ENCODE measurements at regions of chr5 and their contacts with region 1.

Region 1: GRCh38 chr5:139787568-139788293 is 7.9 kb upstream of the PSD2 start:
- DNase-seq: peak; percentile 79 to 95 (median 86)
- H3K4me3 ChIP-seq: peak overlapping the region in 3 of 4 donors; percentile 40 to 63 (median 62)
- H3K27ac ChIP-seq: peak overlapping the region in 2 of 5 donors; percentile 15 to 37
- H3K4me1 ChIP-seq: no peaks in the 10 kb centered on the region
- H3K27me3 ChIP-seq: no peaks in the 10 kb centered on the region
- CTCF ChIP-seq: peak; percentile 90 to 99 (median 98)
- POLR2A ChIP-seq: no peak

Region 2: GRCh38 chr5:139501381-139501780 is 286.4 kb before region 1 on chr5:
- intact Hi-C with region 1: no loop called
- DNase-seq: no peak
- H3K4me3 ChIP-seq: no peak overlapping the region
- H3K27ac ChIP-seq: no peak overlapping the region
- H3K4me1 ChIP-seq: no peaks in the 10 kb centered on the region
- H3K27me3 ChIP-seq: no peaks in the 10 kb centered on the region
- CTCF ChIP-seq: no peak
- POLR2A ChIP-seq: no peak

Region 3: DNA sequence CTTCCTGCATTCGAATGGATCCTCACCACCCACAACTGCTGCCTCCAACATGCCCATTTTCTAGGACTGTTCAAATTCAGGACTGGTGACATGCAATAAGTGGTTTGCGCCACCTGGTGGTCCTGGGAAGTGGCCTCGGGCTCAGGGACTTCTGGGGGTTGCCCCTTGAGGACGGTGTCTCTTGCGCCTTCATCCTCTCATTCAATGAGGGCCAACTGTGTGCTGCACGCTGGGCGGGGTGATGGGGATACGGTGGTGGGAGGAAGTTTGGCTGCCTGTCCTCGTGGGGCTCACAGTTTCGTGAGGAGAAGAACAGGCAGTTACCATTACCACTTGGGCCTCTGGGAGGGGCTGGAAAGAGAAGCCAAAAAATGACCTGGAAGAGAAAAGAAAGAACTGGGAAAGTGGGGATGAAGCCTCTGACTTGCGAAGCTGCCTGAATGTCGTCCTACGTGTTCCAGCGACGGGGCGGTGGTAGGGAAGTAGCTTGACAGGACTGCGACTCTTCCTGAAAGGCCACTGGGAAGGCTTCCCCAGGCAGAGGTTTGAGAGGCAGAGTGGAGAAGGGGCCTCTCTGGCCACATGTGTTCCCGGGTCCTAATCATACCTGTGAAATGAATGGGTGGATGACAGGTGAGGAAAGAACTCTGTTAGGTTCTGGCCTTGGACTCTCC is 56.9 kb after region 1 on chr5:
- intact Hi-C with region 1: loop called (anchors 5 kb)
- DNase-seq: peak; percentile 46 to 90 (median 75)
- H3K4me3 ChIP-seq: no peak overlapping the region
- H3K27ac ChIP-seq: no peak overlapping the region
- H3K4me1 ChIP-seq: no peaks in the 10 kb centered on the region
- H3K27me3 ChIP-seq: no peaks in the 10 kb centered on the region
- CTCF ChIP-seq: peak; percentile 47 to 70 (median 65)
- POLR2A ChIP-seq: no peak

Region 4: GRCh38 chr5:139863855-139864558 is 76.3 kb after region 1 on chr5:
- intact Hi-C with region 1: loop called (anchors 5 kb)
- DNase-seq: peak; percentile 64 to 88 (median 74)
- H3K4me3 ChIP-seq: no peak overlapping the region
- H3K27ac ChIP-seq: peak overlapping the region in 2 of 5 donors; percentile 54 to 62
- H3K4me1 ChIP-seq: peaks cover 6 to 12% of the 10 kb centered on the region in 2 donors
- H3K27me3 ChIP-seq: no peaks in the 10 kb centered on the region
- CTCF ChIP-seq: peak; percentile 87 to 96 (median 88)
- POLR2A ChIP-seq: no peak

Region 5: DNA sequence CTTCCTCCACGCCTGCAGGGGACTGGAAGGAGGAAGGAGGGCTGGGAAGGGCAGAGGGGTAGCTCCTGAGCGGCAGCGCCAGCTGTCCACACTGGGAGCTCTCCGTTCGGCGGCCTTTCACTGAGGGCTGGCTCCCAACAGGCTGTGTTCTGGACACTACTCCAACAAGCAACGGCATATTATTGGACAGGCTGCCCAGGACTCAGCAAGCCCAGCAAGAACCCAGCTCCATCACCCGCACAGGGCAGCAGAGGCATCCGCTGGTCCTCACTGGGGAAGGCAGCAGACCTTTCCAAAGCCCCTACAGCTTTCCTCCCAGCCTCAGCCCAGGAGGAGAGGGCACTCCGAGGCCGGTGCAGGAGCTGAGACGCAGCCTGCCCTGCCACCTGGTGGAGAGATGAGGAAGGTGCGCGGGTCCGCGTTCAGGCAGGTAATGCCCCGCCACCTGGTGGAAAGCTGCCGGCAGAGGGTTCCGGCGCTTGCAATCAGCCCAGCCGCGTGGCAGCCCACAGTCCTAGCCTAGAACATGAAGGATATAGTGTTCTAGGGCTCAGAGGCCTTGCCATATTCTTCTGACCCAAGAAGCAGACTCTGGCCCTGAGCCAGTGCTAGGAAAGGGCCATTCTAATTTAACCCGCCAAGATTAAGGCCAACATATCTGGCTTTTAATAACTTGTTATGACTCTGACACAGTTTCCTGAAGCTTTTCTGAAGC is 181.0 kb after region 1 on chr5:
- intact Hi-C with region 1: loop called (anchors 2 to 5 kb)
- DNase-seq: peak; percentile 79 to 96 (median 91)
- H3K4me3 ChIP-seq: no peak overlapping the region
- H3K27ac ChIP-seq: no peak overlapping the region
- H3K4me1 ChIP-seq: peaks cover 0 to 19% of the 10 kb centered on the region in 2 donors
- H3K27me3 ChIP-seq: no peaks in the 10 kb centered on the region
- CTCF ChIP-seq: peak; percentile 100
- POLR2A ChIP-seq: no peak

Region 6: GRCh38 chr5:140042643-140043500 is 255.1 kb after region 1 on chr5 and contains the start of gene NRG2:
- intact Hi-C with region 1: loop called in 1 of 2 experiments (anchors 2 kb)
- DNase-seq: peak; percentile 74 to 85 (median 78)
- H3K4me3 ChIP-seq: peak within 1 kb of the TSS; percentile 20 to 91 (median 44)
- H3K27ac ChIP-seq: peak within 1 kb of the TSS in 4 of 5 donors; percentile 53 to 85 (median 82)
- H3K4me1 ChIP-seq: peaks cover 28 to 33% of the 10 kb centered on the region in 2 donors
- H3K27me3 ChIP-seq: no peaks in the 10 kb centered on the region
- CTCF ChIP-seq: peak; percentile 18 to 68 (median 53)
- POLR2A ChIP-seq: peak; percentile 19 to 48
- total RNA-seq, gene NRG2: 1.8 to 16.7 (median 11.0) TPM

Region 7: GRCh38 chr5:140157032-140157803 is 369.5 kb after region 1 on chr5:
- intact Hi-C with region 1: loop called (anchors 5 to 10 kb)
- DNase-seq: peak; percentile 88 to 96 (median 91)
- H3K4me3 ChIP-seq: peak overlapping the region in 2 of 4 donors; percentile 22 to 56
- H3K27ac ChIP-seq: peak overlapping the region in 4 of 5 donors; percentile 29 to 83 (median 53)
- H3K4me1 ChIP-seq: peaks cover 0 to 8% of the 10 kb centered on the region in 2 donors
- H3K27me3 ChIP-seq: no peaks in the 10 kb centered on the region
- CTCF ChIP-seq: peak; percentile 82 to 98 (median 94)
- POLR2A ChIP-seq: no peak

Measured in adrenal gland (tissue), 19 donors.